ENCODE measurements at regions of chr12 and their contacts with region 1.

Region 1: DNA sequence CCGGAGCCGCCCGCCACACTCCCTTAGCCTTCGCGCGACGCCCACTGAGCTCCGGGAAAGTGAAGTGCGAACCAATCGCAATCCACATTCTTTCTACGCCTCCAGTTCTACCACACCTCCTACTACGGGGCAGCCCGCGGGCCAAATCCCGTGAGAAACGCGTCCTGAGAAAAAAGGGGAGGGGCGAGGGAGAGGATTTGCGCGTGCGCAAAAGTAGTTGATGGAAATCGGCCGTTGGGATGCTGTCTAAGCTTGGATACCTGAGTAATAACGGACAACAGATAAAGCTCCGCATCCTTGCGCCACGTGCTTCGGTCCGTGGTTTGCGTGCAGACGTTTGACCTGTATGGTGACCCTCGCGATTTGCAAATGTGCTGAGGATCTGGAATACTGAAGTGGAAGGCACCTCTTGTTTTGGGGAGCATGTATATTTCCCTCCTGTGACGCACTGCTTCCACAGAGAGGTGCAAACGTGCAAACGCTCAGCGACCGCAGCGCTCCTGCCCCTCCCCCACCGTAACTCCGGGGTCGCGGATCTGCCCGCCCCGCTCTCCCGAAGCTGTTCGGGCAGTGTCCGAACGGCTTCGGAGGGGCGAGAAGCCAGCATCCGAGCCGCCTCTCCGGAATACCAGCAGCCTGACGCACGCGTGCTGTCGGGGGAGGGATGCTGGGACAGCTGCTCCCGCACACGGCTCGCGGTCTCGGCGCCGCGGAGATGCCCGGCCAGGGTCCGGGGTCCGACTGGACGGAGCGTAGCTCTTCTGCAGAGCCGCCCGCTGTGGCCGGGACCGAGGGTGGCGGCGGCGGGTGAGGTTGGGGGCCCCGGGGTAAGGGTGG is at the starts of genes FAM216A and GPN3:
- DNase-seq: peak; percentile 96
- ATAC-seq: peak; percentile 88
- H3K4me3 ChIP-seq: peak within 1 kb of the TSS; percentile 73
- H3K27ac ChIP-seq: peak within 1 kb of the TSS; percentile 91
- H3K4me1 ChIP-seq: peaks cover 6% of the 10 kb centered on the region
- H3K27me3 ChIP-seq: no peaks in the 10 kb centered on the region
- CTCF ChIP-seq: no peak
- EP300 ChIP-seq: no peak
- POLR2A ChIP-seq: peak; percentile 91
- RAD21 ChIP-seq: no peak
- polyA plus RNA-seq, gene FAM216A: 15.0 to 36.0 TPM
- polyA plus RNA-seq, gene GPN3: 76.9 to 78.7 TPM

Region 2: GRCh38 chr12:109760011-109760954 is 708.1 kb before region 1 on chr12:
- CTCF ChIA-PET with region 1: no interaction called
- POLR2A ChIA-PET with region 1: no interaction called
- RAD21 ChIA-PET with region 1: no interaction called
- SMC1A ChIA-PET with region 1: no interaction called
- in situ Hi-C with region 1: no loop called
- intact Hi-C with region 1: no loop called
- DNase-seq: no peak
- ATAC-seq: no peak
- H3K4me3 ChIP-seq: no peak overlapping the region
- H3K27ac ChIP-seq: no peak overlapping the region
- H3K4me1 ChIP-seq: no peaks in the 10 kb centered on the region
- H3K27me3 ChIP-seq: no peaks in the 10 kb centered on the region
- CTCF ChIP-seq: no peak
- EP300 ChIP-seq: no peak
- POLR2A ChIP-seq: no peak
- RAD21 ChIP-seq: no peak

Region 3: DNA sequence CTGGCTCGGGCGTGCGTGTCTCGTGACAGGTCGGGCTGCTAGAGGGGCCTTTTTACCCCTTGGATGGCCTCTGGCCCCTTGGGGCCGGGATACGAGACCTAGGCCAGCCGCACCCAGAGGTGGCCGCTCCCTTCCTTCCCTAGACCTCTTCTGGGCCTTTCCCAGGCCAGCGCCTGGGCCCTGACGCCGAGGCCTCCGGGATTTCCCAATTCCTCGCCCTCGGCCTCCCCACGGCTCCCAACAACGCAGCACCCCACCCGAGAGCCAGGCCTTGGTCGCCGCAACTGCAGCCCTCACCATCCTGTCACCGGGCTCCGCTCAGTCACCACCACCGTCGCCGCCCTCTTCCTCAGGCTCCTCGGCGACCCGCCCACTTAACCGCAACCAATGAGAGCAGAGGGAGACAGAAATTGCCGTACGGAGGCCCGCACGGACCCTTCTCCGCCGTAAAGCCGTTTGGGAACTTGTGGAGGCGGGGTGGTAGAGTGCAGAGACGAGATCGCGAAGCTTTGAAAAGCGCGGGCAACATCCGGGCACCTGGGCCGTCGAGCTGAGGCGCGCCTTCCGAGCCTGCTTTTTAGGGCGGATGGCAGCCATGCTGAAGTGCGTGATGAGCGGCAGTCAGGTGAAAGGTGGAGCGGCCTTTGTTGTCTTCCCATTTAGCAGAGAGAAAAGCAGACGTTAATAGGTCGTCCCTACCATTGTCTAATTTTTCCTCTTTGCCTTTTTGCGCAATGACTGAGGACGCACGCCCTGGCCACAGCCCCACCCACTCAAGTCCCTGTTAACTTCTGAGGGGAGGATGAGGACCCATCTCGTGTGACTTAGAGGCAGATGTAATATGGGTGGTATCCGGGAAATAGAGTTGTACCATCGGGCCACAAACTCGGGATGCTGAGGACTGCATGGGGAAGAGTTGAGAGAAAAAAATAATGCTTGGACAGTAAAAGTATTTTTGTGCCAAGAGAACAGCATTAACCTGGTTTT is 33.6 kb after region 1 on chr12 and contains the starts of genes RAD9B and VPS29:
- CTCF ChIA-PET with region 1: interaction called, 21 read pairs
- POLR2A ChIA-PET with region 1: interaction called, 22 read pairs
- RAD21 ChIA-PET with region 1: interaction called, 11 read pairs
- SMC1A ChIA-PET with region 1: interaction called, 18 read pairs
- in situ Hi-C with region 1: no loop called
- intact Hi-C with region 1: loop called (anchors 2 kb)
- DNase-seq: peak; percentile 97
- ATAC-seq: peak; percentile 98
- H3K4me3 ChIP-seq: peak within 1 kb of the TSS; percentile 97
- H3K27ac ChIP-seq: peak within 1 kb of the TSS; percentile 92
- H3K4me1 ChIP-seq: peaks cover 4% of the 10 kb centered on the region
- H3K27me3 ChIP-seq: no peaks in the 10 kb centered on the region
- CTCF ChIP-seq: no peak
- EP300 ChIP-seq: peak in 1 of 2 experiments; percentile 81; a peak in 2 of 4 replicates
- POLR2A ChIP-seq: peak; percentile 99
- RAD21 ChIP-seq: no peak
- polyA plus RNA-seq, gene RAD9B: 1.2 to 2.0 TPM
- polyA plus RNA-seq, gene VPS29: 290 to 405 TPM

Region 4: GRCh38 chr12:110508071-110508586 is 39.7 kb after region 1 on chr12:
- CTCF ChIA-PET with region 1: interaction called, 8 read pairs
- POLR2A ChIA-PET with region 1: interaction called, 4 read pairs
- RAD21 ChIA-PET with region 1: interaction called, 28 read pairs
- SMC1A ChIA-PET with region 1: interaction called, 18 read pairs
- in situ Hi-C with region 1: no loop called
- intact Hi-C with region 1: loop called (anchors 2 kb)
- DNase-seq: no peak
- ATAC-seq: no peak
- H3K4me3 ChIP-seq: no peak overlapping the region
- H3K27ac ChIP-seq: no peak overlapping the region
- H3K4me1 ChIP-seq: no peaks in the 10 kb centered on the region; the same call in 1 of the 2 replicates
- H3K27me3 ChIP-seq: no peaks in the 10 kb centered on the region
- CTCF ChIP-seq: no peak
- EP300 ChIP-seq: no peak
- POLR2A ChIP-seq: no peak
- RAD21 ChIP-seq: no peak

Region 5: GRCh38 chr12:110543252-110543959 is 75.0 kb after region 1 on chr12:
- CTCF ChIA-PET with region 1: interaction called, 17 read pairs
- POLR2A ChIA-PET with region 1: interaction called, 5 read pairs
- RAD21 ChIA-PET with region 1: interaction called, 5 read pairs
- SMC1A ChIA-PET with region 1: interaction called, 7 read pairs
- in situ Hi-C with region 1: no loop called
- intact Hi-C with region 1: no loop called
- DNase-seq: peak; percentile 90
- ATAC-seq: peak; percentile 92
- H3K4me3 ChIP-seq: no peak overlapping the region; the same call in 1 of the 2 replicates
- H3K27ac ChIP-seq: peak overlapping the region; percentile 94
- H3K4me1 ChIP-seq: peaks cover 28% of the 10 kb centered on the region
- H3K27me3 ChIP-seq: no peaks in the 10 kb centered on the region
- CTCF ChIP-seq: no peak
- EP300 ChIP-seq: peak in 1 of 2 experiments; percentile 53; a peak in 1 of 4 replicates
- POLR2A ChIP-seq: 0 out of 2 replicates have a peak, but pooled peaks have one; percentile 26
- RAD21 ChIP-seq: no peak

Region 6: GRCh38 chr12:110606253-110606611 is 137.8 kb after region 1 on chr12:
- CTCF ChIA-PET with region 1: interaction called, 130 read pairs
- POLR2A ChIA-PET with region 1: interaction called, 7 read pairs
- RAD21 ChIA-PET with region 1: interaction called, 92 read pairs
- SMC1A ChIA-PET with region 1: interaction called, 99 read pairs
- in situ Hi-C with region 1: loop called (anchors 5 kb)
- intact Hi-C with region 1: loop called (anchors 5 kb)
- DNase-seq: no peak
- ATAC-seq: peak; percentile 57
- H3K4me3 ChIP-seq: peak overlapping the region; percentile 63
- H3K27ac ChIP-seq: peak overlapping the region; percentile 86
- H3K4me1 ChIP-seq: peaks cover 20% of the 10 kb centered on the region
- H3K27me3 ChIP-seq: no peaks in the 10 kb centered on the region
- CTCF ChIP-seq: no peak
- EP300 ChIP-seq: no peak
- POLR2A ChIP-seq: no peak
- RAD21 ChIP-seq: no peak

Region 7: DNA sequence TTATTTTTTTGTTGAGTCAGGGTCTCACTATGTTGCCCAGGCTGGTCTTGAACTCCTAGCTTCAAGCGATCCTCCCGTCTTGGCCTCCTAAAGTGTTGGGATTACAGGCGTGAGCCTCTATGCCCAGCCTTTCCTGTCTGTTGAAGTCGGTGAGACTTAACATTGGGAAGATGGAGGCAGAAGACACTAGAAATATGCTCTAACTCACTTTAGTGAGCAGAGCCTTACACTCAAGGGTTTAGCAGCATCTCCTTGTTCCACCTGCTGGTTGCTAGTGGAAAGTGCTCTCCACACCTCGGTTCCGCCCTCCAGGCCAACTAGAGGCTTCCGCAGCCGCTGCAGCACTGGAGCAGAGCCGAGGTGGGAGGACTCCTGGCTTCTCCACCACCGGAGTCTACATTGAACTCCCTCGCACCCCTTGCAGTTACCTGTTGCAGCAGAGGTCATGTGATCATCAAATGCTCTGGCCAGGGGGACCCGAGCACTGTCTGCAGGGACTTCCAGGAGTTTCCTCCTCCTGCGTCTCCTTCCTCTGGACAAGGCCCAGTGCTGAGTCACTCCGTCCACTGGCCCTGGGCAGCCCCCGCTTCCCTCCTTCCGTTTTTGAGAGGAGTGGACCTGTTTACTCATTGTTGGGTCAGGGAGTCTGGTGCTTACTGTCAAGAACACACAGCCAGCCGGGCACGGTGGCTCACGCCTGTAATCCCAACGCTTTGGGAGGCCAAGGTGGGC is 229.9 kb after region 1 on chr12:
- CTCF ChIA-PET with region 1: interaction called, 4 read pairs
- POLR2A ChIA-PET with region 1: interaction called, 6 read pairs
- RAD21 ChIA-PET with region 1: interaction called, 4 read pairs
- SMC1A ChIA-PET with region 1: interaction called, 3 read pairs
- in situ Hi-C with region 1: no loop called
- intact Hi-C with region 1: loop called (anchors 5 kb)
- DNase-seq: peak; percentile 90
- ATAC-seq: peak; percentile 99
- H3K4me3 ChIP-seq: no peak overlapping the region
- H3K27ac ChIP-seq: peak overlapping the region; percentile 64
- H3K4me1 ChIP-seq: peaks cover 29% of the 10 kb centered on the region
- H3K27me3 ChIP-seq: no peaks in the 10 kb centered on the region
- CTCF ChIP-seq: peak; percentile 88 to 90 (median 89)
- EP300 ChIP-seq: no peak
- POLR2A ChIP-seq: no peak
- RAD21 ChIP-seq: peak; percentile 92

Measured in GM12878 (cell line).